ENCODE measurements at regions of chr19 and their contacts with region 1.

Region 1: DNA sequence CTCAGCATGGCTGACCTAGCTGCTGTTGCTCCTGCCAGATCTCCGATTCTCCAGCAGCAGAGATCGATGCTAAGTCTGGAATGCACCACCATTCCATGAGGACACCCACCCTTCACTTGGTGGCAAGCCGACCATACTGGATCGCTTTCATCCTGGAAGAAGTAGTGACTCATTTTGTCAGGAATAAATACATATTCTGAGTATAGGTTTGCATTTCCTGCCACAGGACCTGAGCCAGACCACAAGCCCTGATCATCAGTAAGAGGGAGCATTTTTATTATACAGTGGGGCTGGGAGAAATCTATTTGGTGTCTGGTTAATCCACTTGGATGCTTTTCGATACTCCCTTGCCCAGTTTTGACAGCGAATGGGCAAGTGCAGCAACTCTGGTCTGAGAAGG is 10.9 kb upstream of the KCTD15 start:
- DNase-seq: no peak
- ATAC-seq: no peak

Region 2: DNA sequence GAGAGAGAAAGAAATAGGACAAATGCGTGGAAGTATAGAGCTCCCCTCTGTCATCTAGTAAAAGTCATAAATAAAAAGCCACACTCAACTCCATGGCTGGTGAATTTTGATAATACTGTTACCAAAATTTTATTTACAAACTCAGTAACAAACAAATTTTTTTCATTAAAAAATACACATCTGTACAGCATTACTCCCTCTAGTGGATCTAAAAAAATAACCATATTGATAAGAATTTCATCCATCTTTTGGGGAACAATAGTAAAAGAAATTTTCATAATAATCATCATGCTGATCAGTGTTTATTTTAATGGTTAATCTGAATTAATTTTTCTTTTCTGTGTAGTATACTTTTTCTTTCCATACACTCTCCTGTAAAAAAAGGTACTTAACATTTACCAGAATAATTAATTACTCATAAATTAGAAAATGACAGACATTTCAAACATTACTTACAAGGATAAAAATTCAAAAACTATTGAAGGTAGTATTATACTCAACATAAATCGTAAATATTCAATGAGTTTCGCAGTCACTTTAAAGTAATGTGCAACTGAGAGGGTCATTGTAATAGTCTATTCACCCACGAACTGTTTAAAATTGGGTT is 213.0 kb after region 1 on chr19:
- intact Hi-C with region 1: loop called in 1 of 2 experiments (anchors 10 kb)
- DNase-seq: no peak
- ATAC-seq: no peak